ENCODE measurements at regions of chr3 and their contacts with region 1.

Region 1: GRCh38 chr3:125431912-125432790 is 57.0 kb upstream of the ZNF148 start:
- DNase-seq: no peak
- ATAC-seq: no peak
- H3K4me3 ChIP-seq: no peak overlapping the region
- H3K27ac ChIP-seq: no peak overlapping the region; the same call in 1 of the 2 replicates
- H3K4me1 ChIP-seq: peaks cover 25% of the 10 kb centered on the region
- H3K27me3 ChIP-seq: no peaks in the 10 kb centered on the region
- CTCF ChIP-seq: no peak
- EP300 ChIP-seq: no peak
- POLR2A ChIP-seq: no peak
- RAD21 ChIP-seq: no peak

Region 2: GRCh38 chr3:125150525-125151441 is 281.4 kb before region 1 on chr3:
- CTCF ChIA-PET with region 1: no interaction called
- POLR2A ChIA-PET with region 1: no interaction called
- RAD21 ChIA-PET with region 1: no interaction called
- SMC1A ChIA-PET with region 1: no interaction called
- in situ Hi-C with region 1: no loop called
- intact Hi-C with region 1: loop called (anchors 5 kb)
- DNase-seq: no peak
- ATAC-seq: peak; percentile 57
- H3K4me3 ChIP-seq: no peak overlapping the region
- H3K27ac ChIP-seq: no peak overlapping the region
- H3K4me1 ChIP-seq: peaks cover 55% of the 10 kb centered on the region
- H3K27me3 ChIP-seq: no peaks in the 10 kb centered on the region
- CTCF ChIP-seq: peak; percentile 49 to 80 (median 70)
- EP300 ChIP-seq: no peak
- POLR2A ChIP-seq: no peak
- RAD21 ChIP-seq: peak; percentile 70

Region 3: DNA sequence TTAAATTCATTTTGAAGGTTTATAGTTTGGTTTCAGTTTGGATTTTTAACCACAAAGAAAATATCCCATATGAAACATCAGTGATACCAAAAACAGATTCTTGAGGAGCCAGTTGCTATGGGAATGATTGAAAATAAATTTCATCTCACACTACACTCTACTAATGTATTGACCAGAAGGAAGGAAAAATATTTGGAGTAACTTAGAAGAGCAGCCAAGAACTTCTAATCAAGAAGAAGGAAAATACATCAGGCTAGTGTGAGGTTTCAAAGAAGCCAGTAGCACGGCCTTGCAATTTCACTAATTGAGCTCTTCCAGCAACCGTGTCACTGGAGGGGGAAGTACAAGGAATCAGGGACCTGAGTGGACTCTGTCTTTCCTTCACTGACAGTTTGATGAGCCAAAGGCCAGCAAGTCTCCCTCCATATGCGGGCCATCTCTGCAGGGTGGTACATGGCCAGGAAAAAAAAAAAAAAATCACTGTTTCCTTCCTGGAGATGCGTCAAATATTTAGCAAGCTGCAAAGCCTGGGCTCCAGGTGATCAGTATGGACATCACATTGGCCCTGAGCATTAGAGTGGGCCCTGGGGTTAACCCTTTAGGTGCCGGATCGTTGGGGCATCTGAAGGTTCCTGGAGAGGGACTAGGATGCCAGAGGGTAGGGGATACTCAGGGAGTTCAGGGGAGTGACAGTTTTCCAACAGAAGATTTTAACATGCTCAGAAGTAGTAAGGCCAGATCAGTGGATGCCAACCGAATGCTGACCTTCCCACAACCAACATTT is 256.7 kb before region 1 on chr3:
- CTCF ChIA-PET with region 1: no interaction called
- POLR2A ChIA-PET with region 1: no interaction called
- RAD21 ChIA-PET with region 1: no interaction called
- SMC1A ChIA-PET with region 1: no interaction called
- in situ Hi-C with region 1: no loop called
- intact Hi-C with region 1: no loop called
- DNase-seq: no peak
- ATAC-seq: no peak
- H3K4me3 ChIP-seq: no peak overlapping the region
- H3K27ac ChIP-seq: no peak overlapping the region
- H3K4me1 ChIP-seq: peaks cover 8% of the 10 kb centered on the region
- H3K27me3 ChIP-seq: no peaks in the 10 kb centered on the region
- CTCF ChIP-seq: no peak
- EP300 ChIP-seq: no peak
- POLR2A ChIP-seq: no peak
- RAD21 ChIP-seq: no peak

Region 4: DNA sequence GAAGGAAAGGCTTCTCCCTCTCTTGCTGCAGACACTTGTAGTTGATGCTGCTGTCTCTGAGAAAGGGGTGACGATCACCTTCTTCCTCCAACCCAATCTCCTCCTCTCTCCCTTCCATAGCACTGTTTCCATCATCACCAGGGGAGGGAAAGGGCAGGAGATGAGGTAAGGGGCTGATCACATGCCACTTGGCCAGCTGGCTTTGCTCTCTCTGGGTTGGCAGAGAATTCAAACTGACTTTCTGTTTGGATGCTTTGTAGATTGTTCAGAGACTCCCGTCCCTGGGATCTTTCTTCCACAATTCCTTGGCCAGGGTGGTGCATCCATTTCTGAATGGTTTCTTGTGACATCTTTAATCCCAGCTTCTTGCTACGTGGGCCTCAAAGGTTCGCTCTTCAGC is 13.8 kb before region 1 on chr3:
- CTCF ChIA-PET with region 1: interaction called, 25 read pairs
- POLR2A ChIA-PET with region 1: interaction called, 5 read pairs
- RAD21 ChIA-PET with region 1: interaction called, 5 read pairs
- SMC1A ChIA-PET with region 1: interaction called, 23 read pairs
- in situ Hi-C with region 1: no loop called
- intact Hi-C with region 1: no loop called
- DNase-seq: no peak
- ATAC-seq: no peak
- H3K4me3 ChIP-seq: no peak overlapping the region
- H3K27ac ChIP-seq: no peak overlapping the region
- H3K4me1 ChIP-seq: peaks cover 4% of the 10 kb centered on the region; the same call in 1 of the 2 replicates
- H3K27me3 ChIP-seq: no peaks in the 10 kb centered on the region
- CTCF ChIP-seq: no peak
- EP300 ChIP-seq: no peak
- POLR2A ChIP-seq: no peak
- RAD21 ChIP-seq: no peak

Measured in GM12878 (cell line).